CD8-positive, alpha-beta memory T cell (primary cell): ENCODE measurements at regions of chr2 and their contacts with region 1.

Region 1: GRCh38 chr2:126527836-126528507 is 128.0 kb upstream of the GYPC start:
- DNase-seq: peak; percentile 57 to 80 (median 63)
- H3K4me3 ChIP-seq: no peak overlapping the region
- H3K4me3 Mint-ChIP-seq: no peak overlapping the region
- H3K27ac ChIP-seq: no peak overlapping the region
- H3K27ac Mint-ChIP-seq: no peak overlapping the region
- H3K4me1 ChIP-seq: no peaks in the 10 kb centered on the region
- H3K4me1 Mint-ChIP-seq: no peaks in the 10 kb centered on the region
- H3K27me3 ChIP-seq: no peaks in the 10 kb centered on the region
- H3K27me3 Mint-ChIP-seq: peaks cover 0 to 1% of the 10 kb centered on the region in 2 donors

Region 2: DNA sequence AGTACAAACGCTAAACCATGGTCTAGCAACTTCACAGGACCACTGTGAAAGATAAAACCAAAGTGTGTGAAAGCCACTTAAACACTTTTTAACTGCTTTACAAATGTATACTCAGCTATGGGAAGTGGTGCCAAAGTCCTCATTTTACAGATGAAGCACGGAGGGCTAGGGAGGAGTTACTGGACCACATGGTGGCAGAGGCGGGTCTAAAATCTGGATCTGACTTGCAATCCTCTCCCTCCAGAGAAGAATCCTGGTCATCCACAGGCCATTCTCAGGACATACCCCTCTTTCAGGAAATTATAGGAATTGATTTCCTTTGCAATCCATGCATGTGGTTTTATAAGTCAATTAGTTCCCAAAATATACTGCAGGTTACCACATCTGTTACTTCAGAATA is 43.4 kb after region 1 on chr2:
- CTCF ChIA-PET with region 1: no interaction called
- POLR2A ChIA-PET with region 1: no interaction called
- DNase-seq: no peak
- H3K4me3 ChIP-seq: no peak overlapping the region
- H3K4me3 Mint-ChIP-seq: no peak overlapping the region
- H3K27ac ChIP-seq: no peak overlapping the region
- H3K27ac Mint-ChIP-seq: no peak overlapping the region
- H3K4me1 ChIP-seq: no peaks in the 10 kb centered on the region
- H3K4me1 Mint-ChIP-seq: no peaks in the 10 kb centered on the region
- H3K27me3 ChIP-seq: no peaks in the 10 kb centered on the region
- H3K27me3 Mint-ChIP-seq: peaks cover 3 to 4% of the 10 kb centered on the region in 2 donors

Region 3: GRCh38 chr2:126634273-126634861 is 106.4 kb after region 1 on chr2:
- CTCF ChIA-PET with region 1: no interaction called
- POLR2A ChIA-PET with region 1: no interaction called
- DNase-seq: peak in 2 of 5 donors; percentile 26 to 51
- H3K4me3 ChIP-seq: no peak overlapping the region
- H3K4me3 Mint-ChIP-seq: no peak overlapping the region
- H3K27ac ChIP-seq: no peak overlapping the region
- H3K27ac Mint-ChIP-seq: no peak overlapping the region
- H3K4me1 ChIP-seq: no peaks in the 10 kb centered on the region
- H3K4me1 Mint-ChIP-seq: peaks cover 4 to 6% (median 4%) of the 10 kb centered on the region in 3 donors
- H3K27me3 ChIP-seq: no peaks in the 10 kb centered on the region
- H3K27me3 Mint-ChIP-seq: peaks cover 4 to 6% of the 10 kb centered on the region in 2 donors

Region 4: GRCh38 chr2:126664234-126664633 is 136.3 kb after region 1 on chr2:
- CTCF ChIA-PET with region 1: interaction called, 10 read pairs
- POLR2A ChIA-PET with region 1: no interaction called
- DNase-seq: peak in 3 of 5 donors; percentile 55 to 58 (median 58)
- H3K4me3 ChIP-seq: peak overlapping the region; percentile 40
- H3K4me3 Mint-ChIP-seq: peak overlapping the region; percentile 65 to 80 (median 72)
- H3K27ac ChIP-seq: peak overlapping the region; percentile 55
- H3K27ac Mint-ChIP-seq: peak overlapping the region; percentile 89 to 98 (median 94)
- H3K4me1 ChIP-seq: peaks cover 92% of the 10 kb centered on the region
- H3K4me1 Mint-ChIP-seq: peaks cover 86 to 99% (median 98%) of the 10 kb centered on the region in 3 donors
- H3K27me3 ChIP-seq: no peaks in the 10 kb centered on the region
- H3K27me3 Mint-ChIP-seq: no peaks in the 10 kb centered on the region

Region 5: GRCh38 chr2:126771501-126772195 is 243.7 kb after region 1 on chr2:
- CTCF ChIA-PET with region 1: interaction called, 115 read pairs
- POLR2A ChIA-PET with region 1: no interaction called
- DNase-seq: no peak
- H3K4me3 ChIP-seq: no peak overlapping the region
- H3K4me3 Mint-ChIP-seq: peak overlapping the region in 2 of 7 donors; percentile 9 to 60
- H3K27ac ChIP-seq: no peak overlapping the region
- H3K27ac Mint-ChIP-seq: peak overlapping the region in 2 of 8 donors; percentile 33 to 87
- H3K4me1 ChIP-seq: peaks cover 4% of the 10 kb centered on the region
- H3K4me1 Mint-ChIP-seq: peaks cover 17 to 33% (median 28%) of the 10 kb centered on the region in 3 donors
- H3K27me3 ChIP-seq: no peaks in the 10 kb centered on the region
- H3K27me3 Mint-ChIP-seq: peaks cover 4 to 6% of the 10 kb centered on the region in 2 donors

Region 6: DNA sequence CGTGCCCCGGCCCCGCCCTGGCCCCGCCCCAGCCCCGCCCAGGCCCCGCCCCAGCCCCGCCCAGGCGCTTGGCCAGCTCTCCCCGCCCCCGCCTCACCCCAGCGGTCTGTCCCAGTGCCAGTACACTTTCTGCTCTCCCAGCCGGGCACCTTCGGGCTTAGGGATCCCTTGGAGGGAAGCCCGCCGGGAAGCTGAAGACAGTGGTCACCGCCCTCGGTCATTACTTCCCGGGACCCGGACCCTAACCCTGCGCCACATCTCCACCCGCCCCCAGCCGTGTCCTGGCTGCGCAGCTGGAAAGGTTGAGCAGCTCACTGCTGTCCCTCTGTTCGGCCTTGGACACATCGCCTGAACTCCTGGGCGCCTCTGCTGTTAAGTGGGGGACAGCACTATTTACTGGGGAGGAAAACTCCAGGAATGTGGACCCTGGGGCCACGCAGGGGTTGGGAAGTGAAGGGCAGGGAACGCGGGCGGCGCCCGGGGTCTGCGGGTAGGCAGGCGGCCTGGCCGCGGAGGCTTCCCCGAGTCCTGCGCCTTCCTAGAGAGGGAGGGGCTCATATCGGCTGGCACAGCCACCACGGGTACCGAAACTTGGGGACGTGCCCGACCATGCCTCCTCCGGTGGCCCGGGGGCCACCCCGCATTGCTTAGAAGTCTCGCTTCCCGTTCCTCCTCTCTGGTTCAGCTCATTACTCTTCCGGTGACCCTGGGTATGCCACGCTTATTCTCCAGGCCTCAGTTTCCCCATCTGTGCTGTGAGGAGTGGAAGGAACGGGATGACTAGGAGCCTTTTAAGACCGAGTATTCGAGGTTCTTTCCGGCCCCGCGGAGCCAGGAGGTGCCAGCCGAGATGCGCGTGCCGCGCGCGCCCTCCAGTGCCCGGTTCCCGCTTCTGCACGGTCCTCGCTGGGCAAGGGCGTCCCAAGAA is 249.0 kb after region 1 on chr2:
- CTCF ChIA-PET with region 1: interaction called, 115 read pairs
- POLR2A ChIA-PET with region 1: interaction called, 6 read pairs
- DNase-seq: peak; percentile 66 to 81 (median 72)
- H3K4me3 ChIP-seq: peak overlapping the region; percentile 60
- H3K4me3 Mint-ChIP-seq: peak overlapping the region; percentile 86 to 98 (median 95)
- H3K27ac ChIP-seq: peak overlapping the region; percentile 39
- H3K27ac Mint-ChIP-seq: peak overlapping the region; percentile 47 to 91 (median 88)
- H3K4me1 ChIP-seq: no peaks in the 10 kb centered on the region
- H3K4me1 Mint-ChIP-seq: peaks cover 15 to 18% (median 17%) of the 10 kb centered on the region in 3 donors
- H3K27me3 ChIP-seq: no peaks in the 10 kb centered on the region
- H3K27me3 Mint-ChIP-seq: peaks cover 9 to 15% of the 10 kb centered on the region in 2 donors

Region 7: DNA sequence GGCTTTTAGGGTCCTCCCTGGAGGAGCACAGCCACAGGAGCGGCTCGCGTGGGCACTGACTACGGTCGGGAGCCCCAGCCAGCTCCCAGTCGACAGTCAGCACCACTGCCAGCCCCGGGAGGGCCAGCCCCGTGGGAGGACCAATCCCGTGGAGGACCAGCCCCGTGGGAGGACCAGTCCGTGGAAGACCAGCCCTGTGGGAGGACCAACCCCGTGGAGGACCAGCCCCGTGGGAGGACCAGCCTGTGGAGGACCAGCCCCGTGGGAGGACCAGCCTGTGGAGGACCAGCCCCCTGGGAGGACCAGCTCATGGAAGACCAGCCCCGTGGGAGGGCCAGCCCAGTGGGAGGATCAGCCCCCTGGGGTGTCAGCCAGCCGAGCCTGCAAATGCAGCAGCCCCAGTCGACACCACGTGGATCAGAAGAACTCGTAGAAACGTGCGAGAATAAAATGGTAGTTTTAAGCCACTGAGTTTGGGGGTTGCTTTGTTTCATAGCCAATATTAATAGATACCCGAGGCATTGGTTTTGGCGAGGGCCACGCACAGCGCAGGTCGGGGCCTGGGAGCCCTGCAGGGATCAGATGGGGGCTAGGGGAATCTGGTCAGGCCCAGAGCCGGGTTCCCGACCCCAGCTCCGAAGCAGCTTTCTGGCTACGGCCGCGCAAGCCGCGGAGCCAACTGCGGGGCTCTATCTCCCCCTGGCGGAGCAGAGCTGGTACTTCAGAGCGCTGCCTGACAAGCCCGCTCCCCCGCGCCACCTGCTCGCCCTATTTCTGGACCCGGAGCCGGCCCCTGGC is 443.7 kb after region 1 on chr2:
- CTCF ChIA-PET with region 1: interaction called, 11 read pairs
- POLR2A ChIA-PET with region 1: no interaction called
- DNase-seq: peak; percentile 40 to 75 (median 51)
- H3K4me3 ChIP-seq: peak overlapping the region; percentile 58
- H3K4me3 Mint-ChIP-seq: peak overlapping the region in 6 of 7 donors; percentile 72 to 85 (median 78)
- H3K27ac ChIP-seq: no peak overlapping the region
- H3K27ac Mint-ChIP-seq: no peak overlapping the region
- H3K4me1 ChIP-seq: no peaks in the 10 kb centered on the region
- H3K4me1 Mint-ChIP-seq: peaks cover 3 to 7% (median 7%) of the 10 kb centered on the region in 3 donors
- H3K27me3 ChIP-seq: peaks cover 6% of the 10 kb centered on the region
- H3K27me3 Mint-ChIP-seq: peaks cover 31 to 71% of the 10 kb centered on the region in 2 donors